Caco-2 (cell line): ENCODE measurements at regions of chr1 and their contacts with region 1.

Region 1: GRCh38 chr1:234875953-234876855 is 252.4 kb downstream of the TOMM20 start:
- DNase-seq: peak; percentile 84 to 87
- H3K4me3 ChIP-seq: no peak overlapping the region
- H3K4me3 Mint-ChIP-seq: no peak overlapping the region
- H3K27ac Mint-ChIP-seq: peak overlapping the region; percentile 58
- H3K4me1 ChIP-seq: peaks cover 44% of the 10 kb centered on the region
- H3K4me1 Mint-ChIP-seq: peaks cover 35% of the 10 kb centered on the region
- H3K27me3 ChIP-seq: no peaks in the 10 kb centered on the region
- H3K27me3 Mint-ChIP-seq: no peaks in the 10 kb centered on the region
- CTCF ChIP-seq: no peak

Region 2: DNA sequence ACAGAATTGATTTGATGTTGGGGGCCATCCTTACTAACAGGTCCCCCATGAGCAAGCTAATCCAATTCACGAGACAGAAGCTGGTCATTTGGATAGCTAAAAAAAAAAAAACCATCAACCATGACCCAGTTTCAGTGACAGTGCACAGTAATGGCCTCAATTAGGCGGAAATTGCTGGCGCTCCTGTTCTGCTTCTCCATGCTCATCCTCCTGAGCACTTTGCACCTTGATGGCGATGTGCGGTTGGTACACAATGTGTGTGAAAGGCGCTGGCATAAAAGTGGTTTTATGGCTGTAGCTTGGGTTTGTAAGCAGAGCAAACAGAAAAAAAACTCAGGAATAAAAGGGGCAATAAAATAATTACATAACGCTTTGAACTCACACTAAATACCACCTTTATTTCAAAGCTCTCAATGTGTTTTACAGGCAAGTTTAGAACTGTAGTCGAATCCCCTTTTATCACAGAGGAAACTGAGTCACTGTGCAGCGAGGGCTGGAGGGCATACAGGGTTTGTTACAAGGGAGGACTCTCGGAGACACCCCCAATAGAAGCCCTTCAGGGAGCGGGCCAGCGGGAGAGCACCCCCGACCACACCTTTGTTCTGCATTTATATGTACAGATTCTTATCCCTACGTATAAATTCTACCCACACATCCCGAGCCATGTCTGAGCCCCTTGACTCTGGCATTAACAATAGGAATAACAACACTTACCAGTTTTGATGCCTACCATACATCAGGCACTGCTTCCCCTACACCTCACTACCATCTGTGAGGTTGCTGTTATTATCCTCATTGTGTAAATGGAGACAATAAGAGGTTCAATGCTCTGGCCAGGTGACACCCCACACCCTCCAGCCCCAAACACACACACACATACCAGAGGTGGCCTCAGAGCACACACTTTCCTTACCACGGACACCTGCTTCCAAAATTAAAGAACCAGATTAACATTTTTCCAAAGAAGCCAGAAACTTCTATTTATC is 52.7 kb before region 1 on chr1:
- CTCF ChIA-PET with region 1: no interaction called
- POLR2A ChIA-PET with region 1: no interaction called
- intact Hi-C with region 1: loop called (anchors 5 kb)
- DNase-seq: peak; percentile 40 to 83
- H3K4me3 ChIP-seq: no peak overlapping the region
- H3K4me3 Mint-ChIP-seq: no peak overlapping the region
- H3K27ac Mint-ChIP-seq: peak overlapping the region; percentile 3
- H3K4me1 ChIP-seq: peaks cover 31% of the 10 kb centered on the region; the same call in 1 of the 2 replicates
- H3K4me1 Mint-ChIP-seq: peaks cover 23% of the 10 kb centered on the region
- H3K27me3 ChIP-seq: no peaks in the 10 kb centered on the region
- H3K27me3 Mint-ChIP-seq: no peaks in the 10 kb centered on the region
- CTCF ChIP-seq: no peak

Region 3: GRCh38 chr1:234907940-234908405 is 31.8 kb after region 1 on chr1:
- CTCF ChIA-PET with region 1: no interaction called
- POLR2A ChIA-PET with region 1: interaction called, 10 read pairs
- intact Hi-C with region 1: no loop called
- DNase-seq: no peak
- H3K4me3 ChIP-seq: no peak overlapping the region
- H3K4me3 Mint-ChIP-seq: no peak overlapping the region
- H3K27ac Mint-ChIP-seq: no peak overlapping the region
- H3K4me1 ChIP-seq: peaks cover 6% of the 10 kb centered on the region
- H3K4me1 Mint-ChIP-seq: peaks cover 13% of the 10 kb centered on the region
- H3K27me3 ChIP-seq: no peaks in the 10 kb centered on the region
- H3K27me3 Mint-ChIP-seq: no peaks in the 10 kb centered on the region
- CTCF ChIP-seq: no peak